ENCODE measurements at regions of chr1 and their contacts with region 1.

Region 1: DNA sequence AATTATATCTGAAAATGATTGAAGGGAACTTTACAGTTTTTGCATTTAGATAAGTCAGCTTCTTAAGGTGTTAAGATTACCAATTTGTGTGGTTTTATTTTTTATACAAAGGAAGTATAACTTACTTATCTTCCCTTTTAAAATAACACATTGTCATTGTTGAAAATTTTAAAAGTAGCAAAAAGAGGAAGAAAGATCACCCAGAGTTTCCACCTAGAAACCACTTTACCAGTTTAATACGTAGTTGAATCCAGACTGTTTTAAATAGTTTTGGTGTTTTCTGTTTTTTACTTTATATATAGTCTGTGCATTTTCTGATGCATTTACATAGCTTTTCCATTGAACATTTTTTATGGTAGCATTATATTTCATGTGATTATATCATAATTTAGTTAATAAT is 6.1 kb downstream of the CCDC18 start:
- DNase-seq: no peak
- ATAC-seq: peak; percentile 42
- H3K4me3 Mint-ChIP-seq: peak overlapping the region; percentile 2
- H3K27ac Mint-ChIP-seq: no peak overlapping the region
- H3K4me1 Mint-ChIP-seq: peaks cover 48% of the 10 kb centered on the region
- H3K27me3 Mint-ChIP-seq: no peaks in the 10 kb centered on the region
- CTCF ChIP-seq: no peak

Region 2: GRCh38 chr1:92817986-92818764 is 368.5 kb before region 1 on chr1:
- CTCF ChIA-PET with region 1: no interaction called
- POLR2A ChIA-PET with region 1: no interaction called
- intact Hi-C with region 1: no loop called
- DNase-seq: no peak
- ATAC-seq: peak; percentile 61
- H3K4me3 Mint-ChIP-seq: no peak overlapping the region
- H3K27ac Mint-ChIP-seq: no peak overlapping the region
- H3K4me1 Mint-ChIP-seq: peaks cover 2% of the 10 kb centered on the region
- H3K27me3 Mint-ChIP-seq: peaks cover 1% of the 10 kb centered on the region
- CTCF ChIP-seq: no peak

Region 3: GRCh38 chr1:92975551-92976232 is 211.0 kb before region 1 on chr1:
- CTCF ChIA-PET with region 1: no interaction called
- POLR2A ChIA-PET with region 1: no interaction called
- intact Hi-C with region 1: loop called (anchors 2 kb)
- DNase-seq: peak; percentile 48
- ATAC-seq: peak; percentile 73
- H3K4me3 Mint-ChIP-seq: peak overlapping the region; percentile 67
- H3K27ac Mint-ChIP-seq: peak overlapping the region; percentile 99
- H3K4me1 Mint-ChIP-seq: peaks cover 91% of the 10 kb centered on the region
- H3K27me3 Mint-ChIP-seq: no peaks in the 10 kb centered on the region
- CTCF ChIP-seq: no peak

Region 4: DNA sequence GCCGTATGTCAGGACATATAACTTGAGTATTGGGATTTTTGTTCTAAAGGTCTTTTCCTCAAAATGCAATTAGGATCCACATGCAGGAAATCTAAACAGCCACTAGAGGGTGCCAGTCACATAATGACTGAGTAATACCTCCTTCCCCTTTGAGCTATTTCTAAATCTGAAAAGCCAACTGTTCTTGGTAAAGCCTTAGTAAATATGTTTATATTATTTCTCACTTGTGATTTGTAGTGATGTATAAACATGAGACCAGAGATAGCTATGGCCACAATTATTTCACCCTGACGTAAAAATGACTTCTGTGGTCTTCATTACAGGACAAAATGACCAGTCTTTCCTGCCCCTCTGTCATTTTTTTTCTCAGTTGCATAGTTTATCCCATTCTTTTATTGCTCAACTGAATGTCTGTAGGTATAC is 118.1 kb after region 1 on chr1:
- CTCF ChIA-PET with region 1: no interaction called
- POLR2A ChIA-PET with region 1: no interaction called
- intact Hi-C with region 1: no loop called
- DNase-seq: no peak
- ATAC-seq: peak; percentile 71
- H3K4me3 Mint-ChIP-seq: no peak overlapping the region
- H3K27ac Mint-ChIP-seq: no peak overlapping the region
- H3K4me1 Mint-ChIP-seq: no peaks in the 10 kb centered on the region
- H3K27me3 Mint-ChIP-seq: no peaks in the 10 kb centered on the region
- CTCF ChIP-seq: peak; percentile 87

Region 5: GRCh38 chr1:93715529-93716126 is 529.0 kb after region 1 on chr1:
- CTCF ChIA-PET with region 1: no interaction called
- POLR2A ChIA-PET with region 1: no interaction called
- intact Hi-C with region 1: no loop called
- DNase-seq: no peak
- ATAC-seq: peak; percentile 53
- H3K4me3 Mint-ChIP-seq: no peak overlapping the region
- H3K27ac Mint-ChIP-seq: peak overlapping the region; percentile 61
- H3K4me1 Mint-ChIP-seq: peaks cover 37% of the 10 kb centered on the region
- H3K27me3 Mint-ChIP-seq: no peaks in the 10 kb centered on the region
- CTCF ChIP-seq: no peak

Measured in activated B cell treated with CpG ODN at 0.5 μM for 24 hours (primary cell).